IMR-90 (cell line): ENCODE measurements at regions of chr5 and their contacts with region 1.

Region 1: DNA sequence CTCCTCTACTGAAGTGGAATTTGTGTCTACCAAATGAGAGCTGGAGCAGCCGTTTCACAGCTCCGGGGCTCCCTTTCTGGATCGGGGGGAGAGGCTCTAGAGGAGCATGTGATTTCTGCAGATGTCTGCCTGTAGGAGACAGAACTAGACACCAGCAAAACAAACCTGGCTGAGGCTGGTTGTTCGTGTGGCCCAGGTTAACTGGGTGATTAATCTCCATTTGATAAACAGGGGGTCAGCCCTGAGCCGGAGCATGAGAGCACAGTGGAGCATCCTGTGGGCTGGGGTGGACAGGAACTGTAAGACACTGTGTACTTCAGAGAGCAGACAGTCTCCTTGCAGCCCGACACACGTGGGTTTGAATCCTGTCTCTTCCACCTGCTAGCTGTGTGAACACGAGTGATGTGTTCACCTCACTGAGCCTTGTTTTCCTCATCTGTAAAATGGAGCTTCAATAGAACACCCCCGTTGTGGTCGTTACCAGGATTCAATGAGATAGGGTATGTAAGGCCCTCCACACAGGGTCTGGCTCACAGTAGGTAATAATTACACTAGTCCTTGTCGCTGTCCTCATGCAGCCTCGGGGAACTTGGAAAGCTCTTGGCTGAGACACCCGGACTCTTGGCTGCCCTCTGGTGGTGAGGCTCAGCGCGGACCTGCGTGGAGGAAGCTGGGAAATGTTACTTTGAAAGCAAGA is 12.9 kb downstream of the CXCL14 start:
- DNase-seq: peak; percentile 52
- ATAC-seq: peak; percentile 74
- H3K4me3 ChIP-seq: no peak overlapping the region
- H3K27ac ChIP-seq: no peak overlapping the region
- H3K4me1 ChIP-seq: no peaks in the 10 kb centered on the region
- H3K27me3 ChIP-seq: peaks cover 17% of the 10 kb centered on the region
- CTCF ChIP-seq: peak; percentile 80
- POLR2A ChIP-seq: no peak
- RAD21 ChIP-seq: peak; percentile 44

Region 2: DNA sequence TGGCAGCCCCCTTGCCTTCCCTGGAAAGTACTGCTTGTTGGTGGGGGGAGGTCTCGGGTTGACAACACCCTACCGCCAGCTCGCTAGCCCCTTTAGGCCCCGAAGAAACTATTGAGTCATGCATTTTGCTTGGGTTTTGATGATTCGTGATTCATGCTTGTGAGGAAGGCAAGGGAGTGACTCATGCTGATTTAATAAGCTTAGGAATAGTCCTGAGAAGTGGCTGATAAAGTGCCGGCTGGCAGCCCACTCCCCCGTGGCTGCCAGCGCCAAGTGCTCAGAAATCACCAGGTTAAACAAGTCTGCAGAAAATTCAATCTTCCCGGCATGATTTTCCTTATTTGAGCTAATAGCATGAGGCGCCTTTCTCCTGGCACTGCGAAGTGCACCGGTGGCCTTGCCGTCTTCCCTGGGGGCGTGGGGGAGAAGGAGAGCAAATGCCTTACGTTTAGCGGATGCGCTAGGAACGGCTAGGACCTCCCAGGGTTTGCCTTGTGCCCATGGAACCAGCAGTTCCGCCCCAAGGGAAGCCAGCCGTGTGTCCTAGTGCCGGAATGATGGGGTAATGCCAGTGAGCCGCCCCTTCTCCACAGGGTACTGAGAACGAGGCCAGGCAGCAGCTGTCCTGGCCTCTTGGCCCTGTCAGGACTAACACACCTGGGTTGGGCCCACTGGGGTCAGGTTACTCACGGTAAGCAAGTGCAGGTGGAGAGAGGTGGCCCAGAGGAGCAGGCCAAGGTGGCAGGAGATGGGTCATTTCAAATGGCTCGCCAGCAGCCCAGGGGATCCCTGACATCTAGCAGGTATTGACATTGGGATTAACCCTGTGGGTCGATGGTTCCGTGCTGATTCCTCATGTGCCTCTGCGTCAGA is 318.7 kb before region 1 on chr5:
- CTCF ChIA-PET with region 1: no interaction called
- POLR2A ChIA-PET with region 1: no interaction called
- dilution Hi-C with region 1: no loop called
- in situ Hi-C with region 1: no loop called
- intact Hi-C with region 1: no loop called
- DNase-seq: peak; percentile 98
- ATAC-seq: peak; percentile 70
- H3K4me3 ChIP-seq: no peak overlapping the region
- H3K27ac ChIP-seq: peak overlapping the region; percentile 86
- H3K4me1 ChIP-seq: peaks cover 49% of the 10 kb centered on the region
- H3K27me3 ChIP-seq: no peaks in the 10 kb centered on the region
- CTCF ChIP-seq: no peak
- POLR2A ChIP-seq: no peak
- RAD21 ChIP-seq: peak; percentile 14

Region 3: GRCh38 chr5:135457424-135458071 is 108.3 kb before region 1 on chr5:
- CTCF ChIA-PET with region 1: interaction called, 16 read pairs
- POLR2A ChIA-PET with region 1: no interaction called
- dilution Hi-C with region 1: loop called (anchors 25 kb)
- in situ Hi-C with region 1: no loop called
- intact Hi-C with region 1: no loop called
- DNase-seq: peak; percentile 36
- ATAC-seq: no peak
- H3K4me3 ChIP-seq: no peak overlapping the region
- H3K27ac ChIP-seq: no peak overlapping the region
- H3K4me1 ChIP-seq: peaks cover 12% of the 10 kb centered on the region
- H3K27me3 ChIP-seq: peaks cover 26% of the 10 kb centered on the region
- CTCF ChIP-seq: peak; percentile 47
- POLR2A ChIP-seq: no peak
- RAD21 ChIP-seq: peak; percentile 31; the same call in 1 of the 2 replicates

Region 4: GRCh38 chr5:135551593-135552447 is 14.1 kb before region 1 on chr5:
- CTCF ChIA-PET with region 1: interaction called, 56 read pairs
- POLR2A ChIA-PET with region 1: interaction called, 3 read pairs
- dilution Hi-C with region 1: no loop called
- in situ Hi-C with region 1: no loop called
- intact Hi-C with region 1: no loop called
- DNase-seq: peak; percentile 75
- ATAC-seq: peak; percentile 92
- H3K4me3 ChIP-seq: no peak overlapping the region
- H3K27ac ChIP-seq: no peak overlapping the region
- H3K4me1 ChIP-seq: no peaks in the 10 kb centered on the region
- H3K27me3 ChIP-seq: peaks cover 59% of the 10 kb centered on the region
- CTCF ChIP-seq: peak; percentile 91
- POLR2A ChIP-seq: no peak
- RAD21 ChIP-seq: peak; percentile 91

Region 5: DNA sequence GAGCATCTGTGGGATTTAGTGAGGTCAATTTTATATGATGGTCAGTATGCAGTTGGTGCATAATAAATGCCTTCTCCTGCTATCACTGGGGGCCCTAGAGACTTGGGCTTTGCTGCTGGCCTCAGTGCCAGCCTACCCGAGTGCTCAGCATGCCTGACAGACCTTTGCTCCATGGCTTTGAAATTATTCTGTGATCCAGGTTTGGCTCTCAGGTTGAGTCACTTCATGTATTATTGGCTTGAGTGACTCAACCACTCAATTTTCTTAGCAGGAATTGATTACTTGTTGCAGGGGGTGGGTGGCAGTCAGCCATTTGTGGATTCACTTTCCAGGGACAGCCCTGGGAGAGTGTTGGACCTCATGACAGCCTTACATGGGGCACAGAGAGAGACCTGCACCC is 282.1 kb after region 1 on chr5:
- CTCF ChIA-PET with region 1: no interaction called
- POLR2A ChIA-PET with region 1: no interaction called
- dilution Hi-C with region 1: no loop called
- in situ Hi-C with region 1: no loop called
- intact Hi-C with region 1: no loop called
- DNase-seq: no peak
- ATAC-seq: no peak
- H3K4me3 ChIP-seq: no peak overlapping the region
- H3K27ac ChIP-seq: no peak overlapping the region
- H3K4me1 ChIP-seq: no peaks in the 10 kb centered on the region
- H3K27me3 ChIP-seq: no peaks in the 10 kb centered on the region; the same call in 1 of the 2 replicates
- CTCF ChIP-seq: no peak
- POLR2A ChIP-seq: no peak
- RAD21 ChIP-seq: no peak

Region 6: GRCh38 chr5:135921388-135921787 is 355.5 kb after region 1 on chr5:
- CTCF ChIA-PET with region 1: no interaction called
- POLR2A ChIA-PET with region 1: no interaction called
- dilution Hi-C with region 1: no loop called
- in situ Hi-C with region 1: no loop called
- intact Hi-C with region 1: no loop called
- DNase-seq: peak; percentile 27
- ATAC-seq: no peak
- H3K4me3 ChIP-seq: no peak overlapping the region
- H3K27ac ChIP-seq: no peak overlapping the region
- H3K4me1 ChIP-seq: no peaks in the 10 kb centered on the region
- H3K27me3 ChIP-seq: peaks cover 16% of the 10 kb centered on the region
- CTCF ChIP-seq: no peak
- POLR2A ChIP-seq: no peak
- RAD21 ChIP-seq: no peak

Region 7: GRCh38 chr5:136020383-136021015 is 454.6 kb after region 1 on chr5:
- CTCF ChIA-PET with region 1: no interaction called
- POLR2A ChIA-PET with region 1: no interaction called
- dilution Hi-C with region 1: no loop called
- in situ Hi-C with region 1: no loop called
- intact Hi-C with region 1: no loop called
- DNase-seq: peak; percentile 99
- ATAC-seq: peak; percentile 66
- H3K4me3 ChIP-seq: no peak overlapping the region
- H3K27ac ChIP-seq: peak overlapping the region; percentile 97; the same call in 1 of the 2 replicates
- H3K4me1 ChIP-seq: peaks cover 51% of the 10 kb centered on the region
- H3K27me3 ChIP-seq: no peaks in the 10 kb centered on the region
- CTCF ChIP-seq: no peak
- POLR2A ChIP-seq: 0 out of 2 replicates have a peak, but pooled peaks have one; percentile 58
- RAD21 ChIP-seq: no peak